Pancreas (tissue), 10 donors: ENCODE measurements at regions of chr12 and their contacts with region 1.

Region 1: DNA sequence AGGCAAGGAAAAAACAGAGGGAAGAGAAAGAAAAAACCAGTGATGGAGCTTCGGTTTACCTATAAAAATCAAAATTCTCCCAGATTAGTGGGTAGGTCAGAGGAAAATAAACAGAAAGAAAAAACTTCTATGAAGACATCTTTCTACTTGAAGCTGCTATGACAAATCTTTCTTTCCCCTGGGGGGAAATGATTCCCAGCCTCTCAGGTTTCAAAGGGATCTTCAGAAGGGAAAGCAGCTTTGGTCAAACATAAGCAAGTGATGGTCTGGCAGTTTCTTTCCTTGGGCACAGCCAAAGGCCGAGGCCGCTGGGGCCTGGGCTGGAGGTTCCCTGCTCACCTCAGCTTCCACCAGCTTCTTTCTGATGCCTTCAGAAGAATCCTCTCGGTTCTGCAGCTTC is 104.5 kb downstream of the PRKAB1 start:
- DNase-seq: no peak
- ATAC-seq: no peak
- H3K4me3 ChIP-seq: no peak overlapping the region
- H3K27ac ChIP-seq: no peak overlapping the region
- H3K4me1 ChIP-seq: no peaks in the 10 kb centered on the region
- H3K27me3 ChIP-seq: no peaks in the 10 kb centered on the region
- CTCF ChIP-seq: no peak

Region 2: GRCh38 chr12:119681961-119682638 is 90.3 kb before region 1 on chr12:
- intact Hi-C with region 1: loop called in 1 of 3 experiments (anchors 10 kb)
- DNase-seq: no peak
- ATAC-seq: no peak
- H3K4me3 ChIP-seq: no peak overlapping the region
- H3K27ac ChIP-seq: peak overlapping the region in 2 of 4 donors; percentile 3 to 24
- H3K4me1 ChIP-seq: peaks cover 0 to 33% (median 11%) of the 10 kb centered on the region in 3 donors
- H3K27me3 ChIP-seq: no peaks in the 10 kb centered on the region
- CTCF ChIP-seq: no peak